Upper lobe of right lung (tissue), 1 donor: ENCODE measurements at regions of chr1 and their contacts with region 1.

Region 1: GRCh38 chr1:147172168-147172992 is at the start of gene PRKAB2:
- DNase-seq: peak; percentile 98
- ATAC-seq: peak; percentile 99
- H3K4me3 ChIP-seq: peak within 1 kb of the TSS; percentile 88
- H3K27ac ChIP-seq: peak within 1 kb of the TSS; percentile 91
- H3K4me1 ChIP-seq: peaks cover 25% of the 10 kb centered on the region
- H3K27me3 ChIP-seq: no peaks in the 10 kb centered on the region
- CTCF ChIP-seq: peak; percentile 94
- total RNA-seq, gene PRKAB2: 12.3 TPM

Region 2: GRCh38 chr1:147111381-147112130 is 60.8 kb before region 1 on chr1:
- intact Hi-C with region 1: no loop called
- DNase-seq: no peak
- ATAC-seq: no peak
- H3K4me3 ChIP-seq: no peak overlapping the region
- H3K27ac ChIP-seq: no peak overlapping the region
- H3K4me1 ChIP-seq: no peaks in the 10 kb centered on the region
- H3K27me3 ChIP-seq: peaks cover 4% of the 10 kb centered on the region
- CTCF ChIP-seq: no peak

Region 3: GRCh38 chr1:147225193-147225730 is 52.9 kb after region 1 on chr1 and contains the start of gene FMO5:
- intact Hi-C with region 1: no loop called
- DNase-seq: peak; percentile 91
- ATAC-seq: peak; percentile 95
- H3K4me3 ChIP-seq: peak within 1 kb of the TSS; percentile 74
- H3K27ac ChIP-seq: peak within 1 kb of the TSS; percentile 73
- H3K4me1 ChIP-seq: no peaks in the 10 kb centered on the region
- H3K27me3 ChIP-seq: no peaks in the 10 kb centered on the region
- CTCF ChIP-seq: peak; percentile 32
- total RNA-seq, gene FMO5: 95.9 TPM

Region 4: GRCh38 chr1:147242439-147243227 is 70.3 kb after region 1 on chr1 and contains the start of gene CHD1L:
- intact Hi-C with region 1: loop called (anchors 10 kb)
- DNase-seq: peak; percentile 98
- ATAC-seq: peak; percentile 97
- H3K4me3 ChIP-seq: peak within 1 kb of the TSS; percentile 95
- H3K27ac ChIP-seq: peak within 1 kb of the TSS; percentile 87
- H3K4me1 ChIP-seq: peaks cover 17% of the 10 kb centered on the region
- H3K27me3 ChIP-seq: no peaks in the 10 kb centered on the region
- CTCF ChIP-seq: peak; percentile 83
- total RNA-seq, gene CHD1L: 36.2 TPM